ENCODE measurements at regions of chr3 and their contacts with region 1.

Region 1: GRCh38 chr3:95673215-95673614 is 1141.2 kb upstream of the EPHA6 start:
- DNase-seq: no peak
- ATAC-seq: no peak
- H3K4me3 ChIP-seq: no peak overlapping the region
- H3K27ac ChIP-seq: no peak overlapping the region
- H3K4me1 ChIP-seq: no peaks in the 10 kb centered on the region
- H3K27me3 ChIP-seq: no peaks in the 10 kb centered on the region
- CTCF ChIP-seq: no peak

Region 2: GRCh38 chr3:94787734-94788270 is 885.4 kb before region 1 on chr3:
- CTCF ChIA-PET with region 1: no interaction called
- POLR2A ChIA-PET with region 1: interaction called, 11 read pairs
- in situ Hi-C with region 1: no loop called
- intact Hi-C with region 1: no loop called
- DNase-seq: no peak
- ATAC-seq: no peak
- H3K4me3 ChIP-seq: no peak overlapping the region
- H3K27ac ChIP-seq: no peak overlapping the region
- H3K4me1 ChIP-seq: no peaks in the 10 kb centered on the region
- H3K27me3 ChIP-seq: no peaks in the 10 kb centered on the region
- CTCF ChIP-seq: no peak

Measured in Panc1 (cell line).